ENCODE measurements at regions of chr17 and their contacts with region 1.

Region 1: DNA sequence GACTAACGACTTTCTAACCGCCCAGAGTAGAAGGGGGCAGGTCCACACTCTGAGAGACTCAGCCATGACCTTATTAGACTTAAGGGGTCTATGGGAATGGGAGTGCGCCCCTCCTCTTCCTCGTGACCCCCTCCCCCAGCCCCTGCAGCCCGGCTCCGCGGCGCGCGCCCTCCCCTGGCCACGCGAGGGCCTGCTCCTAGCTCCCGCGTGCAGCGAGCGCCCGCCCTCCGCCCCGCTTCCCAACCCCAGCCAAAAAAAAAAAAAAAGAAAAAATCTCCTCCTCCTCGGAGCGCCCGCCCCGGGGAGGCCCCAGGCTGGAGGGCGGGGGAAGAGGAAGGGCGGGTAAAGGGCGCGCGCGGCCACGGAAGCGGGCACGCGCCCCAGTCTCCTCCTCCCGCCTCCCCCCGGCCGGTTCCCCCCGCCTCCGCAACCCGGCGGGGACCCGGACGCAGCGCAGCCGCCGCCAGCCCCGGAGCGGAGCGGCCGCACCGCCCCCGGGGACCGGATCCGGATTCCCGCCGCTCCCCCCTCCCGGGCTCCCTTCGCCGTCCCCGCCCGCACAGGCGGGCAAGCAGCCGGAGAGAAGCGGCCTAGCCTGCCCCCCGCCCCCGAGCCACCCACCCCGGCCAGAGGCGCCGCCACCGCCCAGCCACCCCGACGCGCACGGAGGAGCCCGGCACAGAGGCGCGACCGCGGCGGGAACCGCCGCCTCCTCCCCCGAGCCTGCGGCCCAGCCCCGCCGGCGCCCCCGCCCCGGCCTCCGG is 949 bp downstream of the UBTF start:
- DNase-seq: peak; percentile 93
- ATAC-seq: peak; percentile 43
- H3K4me3 Mint-ChIP-seq: peak overlapping the region; percentile 99
- H3K27ac Mint-ChIP-seq: peak overlapping the region; percentile 99
- H3K4me1 Mint-ChIP-seq: peaks cover 51% of the 10 kb centered on the region
- H3K27me3 Mint-ChIP-seq: no peaks in the 10 kb centered on the region

Region 2: DNA sequence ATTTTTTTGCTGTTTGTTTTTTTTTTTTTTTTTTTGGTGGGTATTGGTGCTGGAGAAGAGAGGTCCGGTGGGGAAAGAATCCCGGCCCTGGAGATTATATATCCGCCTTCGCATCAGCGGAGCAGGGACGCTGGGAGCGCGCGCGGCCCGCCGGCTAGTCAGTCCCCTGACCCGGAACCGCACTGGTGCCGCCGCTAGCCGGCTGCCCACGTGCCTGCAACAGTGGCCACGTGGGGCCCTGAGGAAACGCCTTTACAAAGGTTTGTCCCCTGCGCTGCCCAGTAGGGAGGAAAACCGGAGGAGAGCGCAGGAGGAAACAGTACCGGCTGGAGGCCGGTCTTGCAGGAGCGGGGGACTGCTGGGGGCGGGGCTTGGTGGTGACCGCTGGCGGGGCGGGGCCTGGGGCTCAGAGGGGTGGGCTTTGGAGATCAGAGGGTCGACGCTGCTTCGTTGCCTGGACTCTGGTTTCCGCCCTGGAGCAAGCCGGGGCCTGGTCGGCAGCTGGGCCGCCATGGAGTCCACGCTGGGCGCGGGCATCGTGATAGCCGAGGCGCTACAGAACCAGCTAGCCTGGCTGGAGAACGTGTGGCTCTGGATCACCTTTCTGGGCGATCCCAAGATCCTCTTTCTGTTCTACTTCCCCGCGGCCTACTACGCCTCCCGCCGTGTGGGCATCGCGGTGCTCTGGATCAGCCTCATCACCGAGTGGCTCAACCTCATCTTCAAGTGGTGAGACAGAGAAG is 147.9 kb before region 1 on chr17 and contains the start of gene G6PC3:
- CTCF ChIA-PET with region 1: no interaction called
- POLR2A ChIA-PET with region 1: no interaction called
- intact Hi-C with region 1: loop called in 1 of 2 experiments (anchors 2 kb)
- DNase-seq: peak; percentile 93
- ATAC-seq: peak; percentile 68
- H3K4me3 Mint-ChIP-seq: peak within 1 kb of the TSS; percentile 93
- H3K27ac Mint-ChIP-seq: peak within 1 kb of the TSS; percentile 98
- H3K4me1 Mint-ChIP-seq: peaks cover 30% of the 10 kb centered on the region
- H3K27me3 Mint-ChIP-seq: no peaks in the 10 kb centered on the region
- total RNA-seq, gene G6PC3: 21.3 to 22.0 TPM

Region 3: GRCh38 chr17:44141717-44142285 is 76.7 kb before region 1 on chr17 and contains the start of gene HROB:
- CTCF ChIA-PET with region 1: no interaction called
- POLR2A ChIA-PET with region 1: no interaction called
- intact Hi-C with region 1: loop called in 1 of 2 experiments (anchors 1 kb)
- DNase-seq: peak; percentile 99
- ATAC-seq: peak; percentile 83
- H3K4me3 Mint-ChIP-seq: peak within 1 kb of the TSS; percentile 91
- H3K27ac Mint-ChIP-seq: peak within 1 kb of the TSS; percentile 85
- H3K4me1 Mint-ChIP-seq: peaks cover 24% of the 10 kb centered on the region
- H3K27me3 Mint-ChIP-seq: peaks cover 2% of the 10 kb centered on the region
- total RNA-seq, gene HROB: 17.1 to 23.3 TPM

Region 4: GRCh38 chr17:44247440-44247841 is 28.9 kb after region 1 on chr17:
- CTCF ChIA-PET with region 1: interaction called, 4 read pairs
- POLR2A ChIA-PET with region 1: no interaction called
- intact Hi-C with region 1: loop called in 1 of 2 experiments (anchors 2 kb)
- DNase-seq: no peak
- ATAC-seq: no peak
- H3K4me3 Mint-ChIP-seq: no peak overlapping the region
- H3K27ac Mint-ChIP-seq: no peak overlapping the region
- H3K4me1 Mint-ChIP-seq: peaks cover 32% of the 10 kb centered on the region
- H3K27me3 Mint-ChIP-seq: no peaks in the 10 kb centered on the region

Region 5: GRCh38 chr17:44324571-44325275 is 106.2 kb after region 1 on chr17 and contains the start of gene SLC25A39:
- CTCF ChIA-PET with region 1: interaction called, 7 read pairs
- POLR2A ChIA-PET with region 1: interaction called, 11 read pairs
- intact Hi-C with region 1: loop called (anchors 1 to 2 kb)
- DNase-seq: peak; percentile 97
- ATAC-seq: peak; percentile 74
- H3K4me3 Mint-ChIP-seq: peak within 1 kb of the TSS; percentile 84
- H3K27ac Mint-ChIP-seq: peak within 1 kb of the TSS; percentile 94
- H3K4me1 Mint-ChIP-seq: peaks cover 21% of the 10 kb centered on the region
- H3K27me3 Mint-ChIP-seq: no peaks in the 10 kb centered on the region
- total RNA-seq, gene SLC25A39: 127 to 129 TPM

Region 6: GRCh38 chr17:44344939-44345453 is 126.5 kb after region 1 on chr17 and contains the start of gene GRN:
- CTCF ChIA-PET with region 1: interaction called, 10 read pairs
- POLR2A ChIA-PET with region 1: no interaction called
- intact Hi-C with region 1: loop called in 1 of 2 experiments (anchors 1 kb)
- DNase-seq: peak; percentile 92
- ATAC-seq: peak; percentile 99
- H3K4me3 Mint-ChIP-seq: peak within 1 kb of the TSS; percentile 87
- H3K27ac Mint-ChIP-seq: peak within 1 kb of the TSS; percentile 80
- H3K4me1 Mint-ChIP-seq: peaks cover 11% of the 10 kb centered on the region
- H3K27me3 Mint-ChIP-seq: no peaks in the 10 kb centered on the region
- total RNA-seq, gene GRN: 35.4 to 68.0 TPM

Region 7: DNA sequence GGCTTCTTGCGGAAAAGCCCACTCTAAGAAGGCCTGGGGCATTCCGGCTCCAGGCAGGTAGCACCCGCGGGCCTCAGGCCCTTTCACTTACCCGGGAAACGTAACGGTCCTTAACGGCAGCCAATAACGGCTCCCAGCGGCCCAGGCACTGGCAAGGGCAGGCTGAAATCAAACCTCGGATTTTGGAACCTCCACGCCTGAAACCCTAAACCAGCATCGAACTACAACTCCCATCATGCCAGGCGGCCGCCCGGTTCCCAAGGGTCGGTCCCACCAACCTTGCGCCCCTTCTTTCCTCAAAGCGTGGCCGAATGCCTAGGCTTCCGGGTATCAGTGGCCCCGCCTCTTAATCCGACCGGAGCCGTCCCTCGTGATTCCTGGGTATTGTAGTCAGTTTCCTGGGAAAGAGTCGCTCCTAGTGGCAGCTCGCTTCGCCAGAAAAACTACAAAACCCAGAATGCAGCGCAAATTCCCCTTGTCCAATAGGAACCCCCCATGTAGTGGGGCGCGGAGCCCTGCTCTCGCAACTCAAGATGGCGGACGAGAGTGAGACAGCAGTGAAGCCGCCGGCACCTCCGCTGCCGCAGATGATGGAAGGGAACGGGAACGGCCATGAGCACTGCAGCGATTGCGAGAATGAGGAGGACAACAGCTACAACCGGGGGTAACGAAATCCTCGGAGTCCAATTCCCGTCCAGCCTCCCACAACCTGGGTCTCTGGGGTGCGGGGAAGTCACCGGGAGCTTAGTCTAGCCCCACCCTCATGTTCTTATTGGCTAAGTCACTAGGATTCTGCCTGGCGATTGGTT is 842.5 kb after region 1 on chr17 and contains the start of gene NMT1:
- CTCF ChIA-PET with region 1: no interaction called
- POLR2A ChIA-PET with region 1: no interaction called
- intact Hi-C with region 1: loop called in 1 of 2 experiments (anchors 5 kb)
- DNase-seq: peak; percentile 97
- ATAC-seq: peak; percentile 92
- H3K4me3 Mint-ChIP-seq: peak within 1 kb of the TSS; percentile 84
- H3K27ac Mint-ChIP-seq: peak within 1 kb of the TSS; percentile 96
- H3K4me1 Mint-ChIP-seq: peaks cover 42% of the 10 kb centered on the region
- H3K27me3 Mint-ChIP-seq: no peaks in the 10 kb centered on the region
- total RNA-seq, gene NMT1: 170 to 175 TPM